CD4-positive, alpha-beta memory T cell (primary cell): ENCODE measurements at regions of chr1 and their contacts with region 1.

Region 1: GRCh38 chr1:39491146-39491921 is at the start of gene BMP8A:
- DNase-seq: peak; percentile 71 to 77 (median 76)
- H3K4me3 ChIP-seq: peak within 1 kb of the TSS in 1 of 2 donors; percentile 45
- H3K4me3 Mint-ChIP-seq: peak within 1 kb of the TSS; percentile 55 to 79 (median 72)
- H3K27ac ChIP-seq: no peak within 1 kb of the TSS
- H3K27ac Mint-ChIP-seq: peak within 1 kb of the TSS in 3 of 7 donors; percentile 70 to 83 (median 71)
- H3K4me1 ChIP-seq: peaks cover 4% of the 10 kb centered on the region
- H3K4me1 Mint-ChIP-seq: peaks cover 2 to 12% (median 5%) of the 10 kb centered on the region in 4 donors
- H3K27me3 ChIP-seq: peaks cover 7% of the 10 kb centered on the region
- H3K27me3 Mint-ChIP-seq: peaks cover 10 to 11% of the 10 kb centered on the region in 2 donors
- total RNA-seq, gene BMP8A: not detected

Region 2: GRCh38 chr1:39478126-39478915 is 13.0 kb before region 1 on chr1:
- CTCF ChIA-PET with region 1: no interaction called
- POLR2A ChIA-PET with region 1: no interaction called
- intact Hi-C with region 1: no loop called
- DNase-seq: no peak
- H3K4me3 ChIP-seq: no peak overlapping the region
- H3K4me3 Mint-ChIP-seq: no peak overlapping the region
- H3K27ac ChIP-seq: no peak overlapping the region
- H3K27ac Mint-ChIP-seq: peak overlapping the region in 1 of 7 donors; percentile 42
- H3K4me1 ChIP-seq: no peaks in the 10 kb centered on the region
- H3K4me1 Mint-ChIP-seq: peaks cover 0 to 1% (median 0%) of the 10 kb centered on the region in 4 donors
- H3K27me3 ChIP-seq: no peaks in the 10 kb centered on the region
- H3K27me3 Mint-ChIP-seq: no peaks in the 10 kb centered on the region

Region 3: DNA sequence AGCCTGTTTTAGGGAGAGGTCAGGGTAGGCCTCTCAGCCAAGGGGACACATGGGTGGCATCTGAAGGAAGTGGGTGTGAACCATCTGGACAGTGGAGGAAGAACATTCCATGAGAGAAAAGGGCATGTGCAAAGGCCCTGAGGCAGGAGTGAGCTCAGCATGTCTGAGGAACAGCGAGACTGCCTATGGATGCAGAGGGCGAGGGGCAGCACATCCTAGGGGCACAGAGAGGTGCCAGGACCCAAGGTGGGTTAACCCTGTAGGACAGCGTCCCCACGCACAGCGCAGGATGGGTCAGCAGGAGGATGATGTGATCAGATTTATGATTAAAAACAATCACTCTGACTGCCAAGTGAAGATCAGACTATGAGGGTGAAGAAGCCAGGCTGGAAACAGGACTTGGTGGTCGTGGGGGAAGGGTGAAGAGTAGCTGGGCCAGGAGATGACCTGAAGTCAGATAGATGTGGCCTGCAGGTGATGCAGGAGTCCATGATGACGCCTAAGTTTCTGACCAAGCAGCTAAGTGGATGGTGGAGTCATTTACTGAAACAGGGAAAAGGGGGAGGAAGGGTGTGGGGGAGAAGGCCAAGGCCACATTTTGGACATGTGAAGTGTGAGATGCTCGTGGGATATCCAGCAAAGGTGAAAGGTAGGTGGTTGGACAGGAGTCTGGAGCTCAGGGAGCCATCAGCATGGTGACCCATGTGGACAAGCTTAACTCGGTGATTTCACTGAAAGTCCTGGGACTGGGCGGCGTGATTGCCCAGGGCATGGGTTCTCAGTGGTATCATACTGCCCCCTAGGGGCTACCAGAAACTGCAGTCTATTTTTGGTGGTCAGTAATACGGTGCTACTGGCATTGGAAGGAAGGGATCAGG is 47.5 kb after region 1 on chr1:
- CTCF ChIA-PET with region 1: interaction called, 3 read pairs
- POLR2A ChIA-PET with region 1: no interaction called
- intact Hi-C with region 1: loop called (anchors 2 kb)
- DNase-seq: peak; percentile 38 to 49 (median 46)
- H3K4me3 ChIP-seq: no peak overlapping the region
- H3K4me3 Mint-ChIP-seq: no peak overlapping the region
- H3K27ac ChIP-seq: no peak overlapping the region
- H3K27ac Mint-ChIP-seq: peak overlapping the region in 1 of 7 donors; percentile 42
- H3K4me1 ChIP-seq: no peaks in the 10 kb centered on the region
- H3K4me1 Mint-ChIP-seq: peaks cover 0 to 5% (median 2%) of the 10 kb centered on the region in 4 donors
- H3K27me3 ChIP-seq: no peaks in the 10 kb centered on the region
- H3K27me3 Mint-ChIP-seq: no peaks in the 10 kb centered on the region